Right cardiac atrium (tissue), 5 donors: ENCODE measurements at regions of chr6 and their contacts with region 1.

Region 1: DNA sequence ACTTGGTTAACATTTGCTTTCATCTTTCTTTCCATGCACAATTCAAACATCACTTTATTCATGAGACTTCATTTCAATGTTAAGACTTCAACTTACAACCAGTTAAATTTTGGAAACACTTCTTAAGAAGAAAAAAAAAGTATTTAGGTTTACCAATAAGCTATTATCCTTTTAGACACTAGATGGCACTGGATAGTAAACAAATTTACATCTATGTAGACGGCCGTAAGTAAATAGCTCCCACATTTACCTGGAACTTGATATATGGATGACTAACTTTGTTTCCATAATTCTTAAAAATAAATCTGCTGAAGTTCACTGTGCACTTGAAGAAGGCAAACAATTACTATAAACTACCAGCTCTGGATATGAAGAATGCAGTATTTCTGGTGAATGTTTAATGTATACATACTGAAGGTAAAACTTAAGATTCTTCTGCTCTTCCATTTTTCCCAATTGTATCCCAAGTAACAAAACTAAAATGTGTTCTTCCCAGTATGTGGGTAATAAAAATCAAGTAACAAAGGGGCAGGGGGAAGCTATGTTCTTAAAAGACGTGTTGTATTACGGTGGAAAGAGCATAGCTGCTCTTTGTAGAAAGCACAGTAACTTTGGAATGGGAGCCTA is 130.6 kb upstream of the C6orf118 start:
- DNase-seq: no peak
- ATAC-seq: no peak
- H3K4me3 ChIP-seq: no peak overlapping the region
- H3K27ac ChIP-seq: no peak overlapping the region
- H3K4me1 ChIP-seq: no peaks in the 10 kb centered on the region
- H3K27me3 ChIP-seq: no peaks in the 10 kb centered on the region

Region 2: GRCh38 chr6:165729307-165729936 is 289.4 kb after region 1 on chr6:
- intact Hi-C with region 1: loop called in 1 of 4 experiments (anchors 10 kb)
- DNase-seq: no peak
- ATAC-seq: no peak
- H3K4me3 ChIP-seq: no peak overlapping the region
- H3K27ac ChIP-seq: no peak overlapping the region
- H3K4me1 ChIP-seq: no peaks in the 10 kb centered on the region
- H3K27me3 ChIP-seq: no peaks in the 10 kb centered on the region

Region 3: DNA sequence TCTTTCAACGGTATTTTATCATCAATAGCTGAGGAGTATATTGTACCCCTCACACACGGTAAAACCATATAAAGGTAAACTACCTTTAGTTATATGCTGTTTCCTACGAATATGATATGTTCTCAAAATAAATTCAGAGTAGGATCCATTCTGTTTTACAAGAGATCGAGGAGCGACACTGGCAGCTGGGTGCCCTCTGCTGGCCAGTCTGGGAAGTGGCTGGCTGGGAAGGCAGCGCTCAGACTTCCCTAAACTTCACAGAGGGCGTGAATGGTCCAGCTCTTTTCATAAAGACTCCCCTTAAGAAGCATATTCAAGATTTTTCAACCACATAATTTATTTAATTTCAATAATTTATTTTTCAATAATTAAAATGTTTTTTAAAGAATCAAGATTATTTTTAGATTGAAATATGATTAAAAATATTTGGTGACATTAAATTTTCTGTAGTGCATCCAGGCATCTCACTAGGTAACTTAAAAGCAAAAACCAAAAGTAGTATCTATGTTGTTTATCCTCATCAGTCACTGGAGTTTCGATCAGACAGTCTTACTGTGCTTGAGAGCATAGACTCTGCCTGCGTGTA is 410.5 kb after region 1 on chr6:
- intact Hi-C with region 1: loop called in 3 of 4 experiments (anchors 5 to 10 kb)
- DNase-seq: peak; percentile 71 to 89 (median 88)
- ATAC-seq: peak in 1 of 2 donors; percentile 65
- H3K4me3 ChIP-seq: no peak overlapping the region
- H3K27ac ChIP-seq: no peak overlapping the region
- H3K4me1 ChIP-seq: peaks cover 2% of the 10 kb centered on the region
- H3K27me3 ChIP-seq: no peaks in the 10 kb centered on the region

Region 4: GRCh38 chr6:166112580-166112979 is 672.5 kb after region 1 on chr6:
- intact Hi-C with region 1: loop called in 1 of 4 experiments (anchors 10 kb)
- DNase-seq: no peak
- ATAC-seq: peak; percentile 26 to 49
- H3K4me3 ChIP-seq: no peak overlapping the region
- H3K27ac ChIP-seq: no peak overlapping the region
- H3K4me1 ChIP-seq: no peaks in the 10 kb centered on the region
- H3K27me3 ChIP-seq: peaks cover 4% of the 10 kb centered on the region